Breast epithelium (tissue), 4 donors: ENCODE measurements at regions of chr9 and their contacts with region 1.

Region 1: DNA sequence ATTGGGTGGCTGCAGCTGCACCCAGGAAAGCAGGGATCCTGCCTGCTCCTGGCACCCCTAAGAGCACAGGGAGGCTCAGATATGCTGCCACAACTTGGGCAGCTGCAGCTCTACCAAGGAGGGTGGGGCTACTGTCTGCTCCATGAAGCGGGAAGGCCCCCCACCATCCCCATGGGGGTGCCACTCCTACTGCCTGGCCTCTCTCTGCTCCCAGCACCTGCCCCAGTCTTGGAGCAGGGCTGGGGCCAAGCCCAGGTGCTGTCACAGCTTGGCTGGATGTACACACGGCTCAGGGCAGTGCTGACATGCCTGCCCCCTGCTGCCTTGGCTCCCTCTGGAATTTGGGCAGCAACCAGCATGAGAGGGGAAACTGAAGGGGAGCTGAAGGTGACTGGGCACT is 214.7 kb upstream of the PLPPR1 start:
- DNase-seq: no peak
- H3K4me3 ChIP-seq: no peak overlapping the region
- H3K27ac ChIP-seq: no peak overlapping the region
- H3K4me1 ChIP-seq: no peaks in the 10 kb centered on the region
- H3K27me3 ChIP-seq: no peaks in the 10 kb centered on the region
- CTCF ChIP-seq: no peak
- POLR2A ChIP-seq: no peak

Region 2: DNA sequence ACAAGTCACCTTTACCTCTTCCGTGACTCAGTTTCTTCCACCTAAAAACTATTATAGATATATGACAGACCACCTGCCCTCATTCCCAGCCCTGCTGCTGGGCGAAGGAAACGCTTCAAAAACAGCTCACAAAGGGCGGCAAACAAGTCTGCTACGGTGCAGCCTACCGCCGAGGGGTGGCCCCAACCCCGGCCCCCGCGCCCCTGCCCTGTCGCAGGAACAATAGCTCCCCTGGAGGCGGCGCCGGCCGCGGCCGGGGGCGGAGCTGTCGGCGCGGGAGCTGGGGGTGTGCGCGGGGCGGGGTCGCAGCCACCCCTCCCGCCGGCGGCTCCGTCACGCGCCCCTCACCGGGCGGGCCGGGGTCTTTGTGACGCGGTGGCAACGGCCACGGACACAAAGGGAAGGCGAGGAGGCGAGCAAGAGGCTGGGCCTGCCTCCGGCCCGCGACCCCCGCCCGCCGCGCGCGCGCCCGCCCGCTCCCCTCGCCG is 341.0 kb before region 1 on chr9 and contains the start of gene TMEFF1:
- intact Hi-C with region 1: no loop called
- DNase-seq: no peak
- H3K4me3 ChIP-seq: peak within 1 kb of the TSS; percentile 52 to 85 (median 65)
- H3K27ac ChIP-seq: no peak within 1 kb of the TSS
- H3K4me1 ChIP-seq: no peaks in the 10 kb centered on the region
- H3K27me3 ChIP-seq: no peaks in the 10 kb centered on the region
- CTCF ChIP-seq: no peak
- POLR2A ChIP-seq: no peak
- total RNA-seq, gene TMEFF1: 0.29 to 0.66 (median 0.32) TPM

Region 3: GRCh38 chr9:100856238-100856637 is 42.4 kb after region 1 on chr9:
- intact Hi-C with region 1: loop called (anchors 1 kb)
- DNase-seq: no peak
- H3K4me3 ChIP-seq: no peak overlapping the region
- H3K27ac ChIP-seq: no peak overlapping the region
- H3K4me1 ChIP-seq: no peaks in the 10 kb centered on the region
- H3K27me3 ChIP-seq: no peaks in the 10 kb centered on the region
- CTCF ChIP-seq: no peak
- POLR2A ChIP-seq: no peak

Region 4: DNA sequence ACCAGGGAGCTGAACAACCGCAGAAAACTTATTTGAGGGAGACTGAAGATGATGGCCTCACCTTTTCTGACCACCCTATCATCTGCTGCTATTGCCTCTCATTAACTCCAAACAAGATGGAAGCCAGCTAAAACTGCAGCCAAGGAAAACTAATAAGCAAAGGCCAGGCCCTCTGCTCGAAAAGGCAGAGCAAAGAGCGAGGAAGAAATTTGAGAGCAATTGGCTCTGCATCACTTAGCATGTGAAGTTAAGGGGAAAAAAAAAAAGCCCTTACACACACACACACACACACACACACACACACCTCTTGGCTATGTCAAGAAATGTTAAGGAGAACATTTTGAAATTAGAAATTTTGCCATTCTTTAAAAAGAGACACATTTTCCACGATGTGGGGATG is 1953.2 kb after region 1 on chr9:
- intact Hi-C with region 1: no loop called
- DNase-seq: no peak
- H3K4me3 ChIP-seq: no peak overlapping the region
- H3K27ac ChIP-seq: no peak overlapping the region
- H3K4me1 ChIP-seq: no peaks in the 10 kb centered on the region
- H3K27me3 ChIP-seq: no peaks in the 10 kb centered on the region
- CTCF ChIP-seq: no peak
- POLR2A ChIP-seq: no peak